Activated CD4-positive, alpha-beta T cell treated with anti-CD3 and anti-CD28 coated beads, Interleukin-2, amount 10 ng/mL, durations not matched to agents 24 days and 14 days (primary cell): ENCODE measurements at regions of chr16 and their contacts with region 1.

Region 1: DNA sequence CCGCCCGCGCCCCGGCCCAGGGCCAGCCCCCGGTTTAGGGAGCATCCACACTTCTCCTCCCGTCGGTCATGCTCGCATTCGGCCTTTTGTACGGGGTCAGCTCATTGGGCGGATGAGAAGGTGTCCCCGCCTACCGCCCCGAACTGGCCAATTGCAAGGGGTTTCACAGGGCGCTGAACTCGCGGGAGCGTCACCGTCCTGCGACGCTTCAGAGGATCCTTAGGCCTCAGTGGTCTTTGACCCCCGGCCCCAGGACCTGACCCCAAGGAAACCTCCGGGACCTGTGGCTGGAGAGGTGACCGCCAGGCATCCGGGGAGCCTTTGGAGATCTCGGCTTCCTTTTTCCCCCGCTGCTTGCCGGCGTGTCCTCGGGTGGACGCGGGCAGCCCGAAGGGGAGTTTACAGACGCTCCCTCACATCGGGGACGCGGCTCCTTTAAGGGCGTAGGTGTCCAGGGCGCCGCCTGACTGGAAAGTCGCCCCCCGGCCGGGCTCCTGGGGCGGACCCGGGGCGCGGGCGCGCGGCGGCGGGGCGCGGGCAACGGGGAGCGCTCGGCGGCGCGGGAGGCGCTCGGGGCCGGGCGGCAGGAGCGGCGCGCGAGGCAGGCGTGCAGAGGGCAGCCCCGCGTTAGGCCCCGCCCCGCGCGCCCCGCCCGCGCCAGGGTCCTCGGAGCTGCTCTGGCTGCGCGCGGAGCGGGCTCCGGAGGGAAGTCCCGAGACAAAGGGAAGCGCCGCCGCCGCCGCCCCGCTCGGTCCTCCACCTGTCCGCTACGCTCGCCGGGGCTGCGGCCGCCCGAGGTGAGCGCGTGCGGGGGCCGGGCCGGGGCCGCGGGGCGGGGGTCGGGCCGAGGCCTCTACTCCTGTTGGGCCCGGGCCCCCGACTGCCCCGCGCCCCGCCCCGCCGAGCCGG is at the start of gene UBE2I:
- DNase-seq: peak; percentile 99
- H3K4me3 Mint-ChIP-seq: peak within 1 kb of the TSS; percentile 94
- H3K27ac Mint-ChIP-seq: peak within 1 kb of the TSS; percentile 99
- H3K4me1 Mint-ChIP-seq: peaks cover 22% of the 10 kb centered on the region
- H3K27me3 Mint-ChIP-seq: no peaks in the 10 kb centered on the region
- total RNA-seq, gene UBE2I: 269 and 278 TPM in 2 replicates

Region 2: GRCh38 chr16:740764-741505 is 568.3 kb before region 1 on chr16 and contains the start of gene CIAO3:
- intact Hi-C with region 1: loop called (anchors 2 kb)
- DNase-seq: peak; percentile 98
- H3K4me3 Mint-ChIP-seq: peak within 1 kb of the TSS; percentile 85
- H3K27ac Mint-ChIP-seq: peak within 1 kb of the TSS; percentile 62
- H3K4me1 Mint-ChIP-seq: peaks cover 9% of the 10 kb centered on the region
- H3K27me3 Mint-ChIP-seq: no peaks in the 10 kb centered on the region
- total RNA-seq, gene CIAO3: 39.5 and 42.5 TPM in 2 replicates

Region 3: DNA sequence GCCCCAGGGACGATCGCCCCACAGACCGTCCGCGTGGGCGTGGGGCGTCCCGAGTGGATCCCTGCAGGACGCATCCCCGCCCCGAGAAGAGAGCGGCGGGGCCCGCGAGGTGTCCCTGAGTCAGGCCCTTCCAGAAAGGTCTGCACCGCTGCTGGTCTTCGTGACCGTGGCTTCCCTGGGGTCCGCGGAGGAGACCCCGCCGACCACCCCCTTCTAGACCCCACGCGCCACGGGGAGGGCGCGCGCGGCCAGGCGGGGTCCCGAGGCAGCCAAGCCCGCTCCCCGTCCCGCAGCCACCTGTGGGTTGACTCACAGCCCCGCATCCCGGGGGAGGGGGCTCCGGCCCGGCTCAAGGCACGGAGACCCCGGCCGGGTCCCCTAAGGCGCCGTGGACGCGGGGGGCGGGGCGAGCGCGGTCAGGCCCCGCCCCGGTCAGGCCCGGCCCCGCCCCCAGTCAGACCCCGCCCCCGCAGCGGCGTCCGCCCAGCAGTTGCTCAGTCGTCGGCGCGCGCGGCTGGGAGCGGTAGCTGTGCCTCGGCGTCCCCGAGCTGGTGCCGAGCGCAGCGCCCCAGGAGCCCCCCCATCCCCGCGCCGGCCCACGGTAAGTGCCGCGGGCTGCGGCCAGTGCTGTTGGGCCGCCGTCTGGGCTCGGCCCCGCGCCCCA is 24.1 kb after region 1 on chr16 and contains the start of gene BAIAP3:
- intact Hi-C with region 1: loop called (anchors 1 kb)
- DNase-seq: peak; percentile 87
- H3K4me3 Mint-ChIP-seq: peak within 1 kb of the TSS; percentile 69
- H3K27ac Mint-ChIP-seq: no peak within 1 kb of the TSS
- H3K4me1 Mint-ChIP-seq: peaks cover 10% of the 10 kb centered on the region
- H3K27me3 Mint-ChIP-seq: peaks cover 28% of the 10 kb centered on the region
- total RNA-seq, gene BAIAP3: 0.30 TPM in 1 of 2 replicates, not detected in the other

Region 4: GRCh38 chr16:1342526-1343427 is 33.5 kb after region 1 on chr16:
- intact Hi-C with region 1: loop called (anchors 2 kb)
- DNase-seq: peak; percentile 97
- H3K4me3 Mint-ChIP-seq: peak overlapping the region; percentile 78
- H3K27ac Mint-ChIP-seq: peak overlapping the region; percentile 60
- H3K4me1 Mint-ChIP-seq: peaks cover 11% of the 10 kb centered on the region
- H3K27me3 Mint-ChIP-seq: no peaks in the 10 kb centered on the region

Region 5: DNA sequence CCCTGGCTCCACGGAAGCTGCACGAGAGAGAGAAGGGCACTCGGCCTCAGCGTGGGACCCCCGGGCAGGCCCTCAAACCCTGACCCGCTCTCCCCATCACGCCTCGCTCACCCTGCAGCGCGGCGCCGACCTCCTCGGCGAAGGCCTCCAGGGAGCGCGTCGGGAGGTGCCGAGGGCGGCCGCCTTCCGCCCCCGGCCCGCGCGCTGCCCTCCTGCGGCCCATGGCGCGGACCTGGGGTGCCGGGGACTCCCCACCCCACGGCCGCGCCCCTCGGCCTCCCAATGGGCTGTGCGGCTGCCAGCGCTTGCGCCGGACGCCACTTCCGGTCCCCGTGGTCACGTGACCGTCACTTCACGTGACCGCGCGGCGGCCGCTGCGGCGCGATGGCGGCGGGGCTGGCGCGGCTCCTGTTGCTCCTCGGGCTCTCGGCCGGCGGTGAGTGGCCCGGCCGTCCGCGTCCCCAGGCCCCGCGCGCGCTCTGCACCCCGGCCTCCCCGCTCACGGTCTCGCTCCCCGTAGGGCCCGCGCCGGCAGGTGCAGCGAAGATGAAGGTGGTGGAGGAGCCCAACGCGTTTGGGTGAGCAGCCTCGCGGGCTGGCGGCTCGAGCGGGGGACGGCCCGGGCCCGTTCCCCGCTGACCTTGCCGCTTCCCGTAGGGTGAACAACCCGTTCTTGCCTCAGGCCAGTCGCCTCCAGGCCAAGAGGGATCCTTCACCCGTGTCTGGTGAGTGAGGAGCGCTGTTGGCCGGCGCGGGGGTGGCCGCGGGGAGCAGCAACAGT is 42.5 kb after region 1 on chr16 and contains the starts of genes GNPTG and TSR3:
- intact Hi-C with region 1: loop called (anchors 2 kb)
- DNase-seq: peak; percentile 98
- H3K4me3 Mint-ChIP-seq: peak within 1 kb of the TSS; percentile 92
- H3K27ac Mint-ChIP-seq: peak within 1 kb of the TSS; percentile 78
- H3K4me1 Mint-ChIP-seq: peaks cover 27% of the 10 kb centered on the region
- H3K27me3 Mint-ChIP-seq: no peaks in the 10 kb centered on the region
- total RNA-seq, gene GNPTG: 23.3 and 23.9 TPM in 2 replicates
- total RNA-seq, gene TSR3: 81.5 and 88.2 TPM in 2 replicates

Region 6: DNA sequence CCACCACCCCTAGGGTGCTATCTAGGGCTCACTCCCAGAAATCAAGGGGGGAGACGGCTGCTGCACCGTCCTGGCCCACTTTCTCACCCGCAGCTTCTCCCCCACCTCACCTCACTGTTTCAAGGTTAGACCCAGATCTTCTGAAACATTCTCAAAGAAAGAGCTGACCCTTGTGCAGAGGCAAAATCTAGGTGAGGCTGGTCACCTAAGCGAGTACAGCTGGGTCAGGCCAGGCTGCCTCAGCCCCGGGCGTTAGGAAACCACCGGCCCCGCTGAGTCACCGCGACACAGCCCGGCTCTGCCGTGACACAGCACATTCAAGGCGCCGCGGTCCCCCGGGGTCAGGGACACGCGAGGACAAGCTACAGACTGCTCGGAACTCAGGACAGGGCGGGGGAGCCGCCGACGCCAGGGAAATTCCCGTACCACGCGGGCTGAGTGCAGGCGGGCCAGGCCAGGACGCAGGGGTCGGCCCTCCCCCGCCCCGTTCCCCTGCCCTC is 69.6 kb after region 1 on chr16:
- intact Hi-C with region 1: loop called (anchors 2 kb)
- DNase-seq: peak; percentile 88
- H3K4me3 Mint-ChIP-seq: peak overlapping the region; percentile 82
- H3K27ac Mint-ChIP-seq: peak overlapping the region; percentile 92
- H3K4me1 Mint-ChIP-seq: peaks cover 13% of the 10 kb centered on the region
- H3K27me3 Mint-ChIP-seq: no peaks in the 10 kb centered on the region

Region 7: DNA sequence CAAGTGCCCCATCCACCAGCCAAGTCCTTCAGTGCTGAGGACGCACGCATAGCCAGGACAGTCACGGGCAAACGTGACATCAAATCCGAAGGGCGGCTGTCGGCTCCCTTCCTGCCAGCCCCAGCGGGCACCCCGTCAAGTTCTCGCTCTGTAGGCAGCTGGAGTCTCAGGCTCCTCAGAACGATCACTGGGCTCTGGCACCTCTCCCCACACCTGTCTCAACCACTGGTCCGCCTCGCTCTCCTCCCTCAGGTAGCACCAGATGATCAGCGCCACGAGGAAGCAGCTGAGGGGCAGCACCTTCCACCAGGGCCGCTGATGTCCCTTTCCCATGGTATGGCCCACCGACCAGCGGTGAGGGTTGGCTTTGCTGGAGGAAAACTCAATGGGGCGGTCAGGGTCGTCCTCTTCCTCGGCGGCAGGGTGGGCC is 110.9 kb after region 1 on chr16:
- intact Hi-C with region 1: loop called (anchors 2 kb)
- DNase-seq: no peak
- H3K4me3 Mint-ChIP-seq: peak overlapping the region; percentile 81
- H3K27ac Mint-ChIP-seq: peak overlapping the region; percentile 97
- H3K4me1 Mint-ChIP-seq: peaks cover 18% of the 10 kb centered on the region
- H3K27me3 Mint-ChIP-seq: peaks cover 3% of the 10 kb centered on the region

Region 8: GRCh38 chr16:1579201-1579600 is 270.0 kb after region 1 on chr16:
- intact Hi-C with region 1: no loop called
- DNase-seq: peak; percentile 70
- H3K4me3 Mint-ChIP-seq: no peak overlapping the region
- H3K27ac Mint-ChIP-seq: no peak overlapping the region
- H3K4me1 Mint-ChIP-seq: peaks cover 5% of the 10 kb centered on the region
- H3K27me3 Mint-ChIP-seq: no peaks in the 10 kb centered on the region